Endothelial cell of umbilical vein (primary cell): ENCODE measurements at regions of chr3 and their contacts with region 1.

Region 1: DNA sequence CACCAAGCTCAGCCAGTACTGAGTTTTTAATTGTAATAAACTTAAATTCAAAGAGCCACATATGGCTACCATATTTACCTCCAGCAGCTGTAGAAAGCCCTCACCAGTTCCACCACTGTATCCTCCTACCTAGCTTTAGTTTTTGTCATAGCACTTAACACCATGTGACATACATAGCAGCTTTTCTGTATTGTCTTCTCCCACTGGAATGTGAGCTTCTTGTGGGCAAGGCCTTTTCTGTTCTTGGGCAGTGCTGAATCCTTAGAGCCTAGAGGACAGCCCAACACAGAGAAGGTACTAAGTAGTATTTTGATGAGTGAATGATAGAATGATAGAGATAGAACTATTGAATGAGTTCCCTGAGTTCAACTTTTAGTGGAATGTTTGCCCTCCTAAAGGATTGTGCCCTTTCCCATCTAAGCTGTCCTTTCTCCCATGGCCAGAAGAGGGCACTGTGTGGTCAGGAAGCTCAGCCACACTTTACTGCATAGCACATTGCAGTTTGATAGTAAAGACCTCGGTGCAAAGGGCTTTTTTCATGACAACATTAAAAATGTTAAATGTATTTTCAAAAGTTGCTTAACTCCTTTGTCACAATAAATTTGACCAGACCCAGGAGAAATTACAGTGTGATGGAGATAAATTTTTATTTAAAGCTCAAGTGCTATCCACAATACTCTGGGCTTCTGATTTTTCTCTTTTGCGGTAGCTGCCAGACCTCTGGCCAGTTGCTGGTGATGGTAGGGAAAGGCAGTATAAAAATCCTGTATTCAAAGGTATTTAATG is 115.8 kb downstream of the GHSR start:
- DNase-seq: peak; percentile 70
- H3K4me3 ChIP-seq: no peak overlapping the region
- H3K27ac ChIP-seq: no peak overlapping the region
- H3K4me1 ChIP-seq: no peaks in the 10 kb centered on the region
- H3K27me3 ChIP-seq: no peaks in the 10 kb centered on the region
- CTCF ChIP-seq: peak; percentile 82 to 91
- POLR2A ChIP-seq: no peak

Region 2: DNA sequence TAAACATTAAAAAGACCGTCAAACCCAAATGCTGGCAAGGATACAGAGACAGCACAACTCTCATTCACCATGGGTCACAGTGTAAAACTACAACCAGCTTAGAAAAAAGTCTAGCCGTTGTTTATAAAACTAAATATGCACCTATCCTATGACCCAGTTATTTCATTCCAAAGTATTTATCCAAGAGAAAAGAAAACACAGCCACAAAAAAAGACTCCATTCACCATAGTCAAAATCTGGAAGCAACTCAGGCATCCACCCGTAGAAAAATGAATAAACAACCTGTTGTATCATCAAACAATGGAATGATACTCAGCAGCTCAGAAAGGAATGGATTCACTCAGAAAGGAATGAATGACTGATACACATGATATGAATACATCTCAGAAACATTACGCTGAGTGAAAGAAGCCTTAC is 550.7 kb before region 1 on chr3:
- CTCF ChIA-PET with region 1: no interaction called
- POLR2A ChIA-PET with region 1: no interaction called
- dilution Hi-C with region 1: no loop called
- intact Hi-C with region 1: loop called (anchors 5 kb)
- DNase-seq: peak; percentile 44
- H3K4me3 ChIP-seq: no peak overlapping the region
- H3K27ac ChIP-seq: peak overlapping the region; percentile 61
- H3K4me1 ChIP-seq: peaks cover 53% of the 10 kb centered on the region
- H3K27me3 ChIP-seq: no peaks in the 10 kb centered on the region
- CTCF ChIP-seq: no peak
- POLR2A ChIP-seq: no peak

Region 3: DNA sequence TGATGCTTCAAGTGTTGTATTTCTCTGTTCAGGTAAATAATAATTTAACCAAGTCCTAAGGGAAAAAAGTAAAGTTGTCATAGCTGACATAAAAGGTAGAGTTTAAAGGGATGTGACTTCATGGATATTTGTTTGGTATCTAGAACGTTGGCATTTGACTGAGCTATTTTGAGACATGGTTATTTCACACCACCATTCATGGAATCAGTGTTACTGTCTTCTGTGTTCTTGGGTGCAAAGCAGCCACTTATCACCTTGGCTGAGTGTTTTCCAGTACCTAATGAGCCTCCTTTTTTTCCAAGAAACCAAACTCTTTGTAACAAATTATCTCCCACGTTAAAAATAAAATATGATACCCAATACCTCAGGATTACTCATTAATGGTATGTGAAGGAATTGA is 40.0 kb before region 1 on chr3:
- CTCF ChIA-PET with region 1: no interaction called
- POLR2A ChIA-PET with region 1: no interaction called
- dilution Hi-C with region 1: no loop called
- intact Hi-C with region 1: no loop called
- DNase-seq: no peak
- H3K4me3 ChIP-seq: no peak overlapping the region
- H3K27ac ChIP-seq: no peak overlapping the region
- H3K4me1 ChIP-seq: peaks cover 20% of the 10 kb centered on the region
- H3K27me3 ChIP-seq: no peaks in the 10 kb centered on the region
- CTCF ChIP-seq: no peak
- POLR2A ChIP-seq: no peak

Region 4: DNA sequence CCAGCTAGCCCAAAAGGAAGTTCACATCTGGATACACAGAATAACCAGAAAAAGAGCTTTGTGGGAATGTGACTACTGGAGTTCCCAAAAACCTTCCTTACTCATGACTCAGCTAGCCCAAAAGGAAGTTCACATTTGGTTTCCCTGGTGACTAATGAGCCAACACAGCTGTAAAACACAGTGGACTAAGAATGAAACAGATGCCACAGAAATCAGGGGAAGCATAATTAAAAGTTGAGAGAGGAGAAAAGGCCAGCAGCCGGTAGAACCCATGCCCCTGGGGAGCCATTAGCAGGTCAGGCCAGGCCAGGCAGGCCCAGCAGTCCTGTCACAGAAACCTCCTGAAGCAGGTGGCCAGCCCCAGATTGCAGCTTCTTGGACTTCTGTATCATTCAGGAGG is 14.5 kb before region 1 on chr3:
- CTCF ChIA-PET with region 1: interaction called, 68 read pairs
- POLR2A ChIA-PET with region 1: interaction called, 8 read pairs
- dilution Hi-C with region 1: no loop called
- intact Hi-C with region 1: no loop called
- DNase-seq: peak; percentile 94
- H3K4me3 ChIP-seq: no peak overlapping the region
- H3K27ac ChIP-seq: peak overlapping the region; percentile 96
- H3K4me1 ChIP-seq: peaks cover 32% of the 10 kb centered on the region
- H3K27me3 ChIP-seq: no peaks in the 10 kb centered on the region
- CTCF ChIP-seq: no peak
- POLR2A ChIP-seq: no peak

Region 5: GRCh38 chr3:172347895-172348680 is 15.6 kb after region 1 on chr3:
- CTCF ChIA-PET with region 1: interaction called, 65 read pairs
- POLR2A ChIA-PET with region 1: no interaction called
- dilution Hi-C with region 1: no loop called
- intact Hi-C with region 1: no loop called
- DNase-seq: peak; percentile 38
- H3K4me3 ChIP-seq: no peak overlapping the region
- H3K27ac ChIP-seq: no peak overlapping the region
- H3K4me1 ChIP-seq: peaks cover 15% of the 10 kb centered on the region
- H3K27me3 ChIP-seq: no peaks in the 10 kb centered on the region
- CTCF ChIP-seq: no peak
- POLR2A ChIP-seq: no peak

Region 6: GRCh38 chr3:172355839-172356238 is 23.4 kb after region 1 on chr3:
- CTCF ChIA-PET with region 1: interaction called, 18 read pairs
- POLR2A ChIA-PET with region 1: no interaction called
- dilution Hi-C with region 1: no loop called
- intact Hi-C with region 1: no loop called
- DNase-seq: peak; percentile 93
- H3K4me3 ChIP-seq: no peak overlapping the region
- H3K27ac ChIP-seq: no peak overlapping the region
- H3K4me1 ChIP-seq: peaks cover 16% of the 10 kb centered on the region
- H3K27me3 ChIP-seq: no peaks in the 10 kb centered on the region
- CTCF ChIP-seq: no peak
- POLR2A ChIP-seq: no peak

Region 7: DNA sequence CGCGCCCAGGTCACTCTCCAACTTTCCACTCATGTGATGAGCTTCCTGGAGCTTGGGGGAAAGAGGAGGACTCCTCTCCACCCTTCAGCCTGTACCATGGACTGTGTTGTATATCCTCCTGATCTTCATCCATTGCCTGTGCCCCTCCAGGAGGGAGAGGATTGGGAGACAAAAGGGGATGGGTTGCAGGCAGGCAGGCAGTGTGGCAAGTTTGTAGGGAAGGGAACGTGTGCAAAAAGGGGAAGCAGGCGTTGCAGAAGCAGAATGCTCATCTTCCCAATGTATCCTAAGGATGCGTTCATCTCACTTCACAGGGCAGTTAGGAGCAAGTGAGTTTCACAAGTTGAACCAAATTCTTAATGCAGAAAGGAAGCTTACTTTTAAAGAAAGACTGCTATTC is 143.9 kb after region 1 on chr3:
- CTCF ChIA-PET with region 1: interaction called, 29 read pairs
- POLR2A ChIA-PET with region 1: no interaction called
- dilution Hi-C with region 1: no loop called
- intact Hi-C with region 1: no loop called
- DNase-seq: peak; percentile 12
- H3K4me3 ChIP-seq: peak overlapping the region in 1 of 3 experiments; percentile 38
- H3K27ac ChIP-seq: peak overlapping the region; percentile 78
- H3K4me1 ChIP-seq: peaks cover 14% of the 10 kb centered on the region
- H3K27me3 ChIP-seq: no peaks in the 10 kb centered on the region
- CTCF ChIP-seq: no peak
- POLR2A ChIP-seq: no peak

Region 8: DNA sequence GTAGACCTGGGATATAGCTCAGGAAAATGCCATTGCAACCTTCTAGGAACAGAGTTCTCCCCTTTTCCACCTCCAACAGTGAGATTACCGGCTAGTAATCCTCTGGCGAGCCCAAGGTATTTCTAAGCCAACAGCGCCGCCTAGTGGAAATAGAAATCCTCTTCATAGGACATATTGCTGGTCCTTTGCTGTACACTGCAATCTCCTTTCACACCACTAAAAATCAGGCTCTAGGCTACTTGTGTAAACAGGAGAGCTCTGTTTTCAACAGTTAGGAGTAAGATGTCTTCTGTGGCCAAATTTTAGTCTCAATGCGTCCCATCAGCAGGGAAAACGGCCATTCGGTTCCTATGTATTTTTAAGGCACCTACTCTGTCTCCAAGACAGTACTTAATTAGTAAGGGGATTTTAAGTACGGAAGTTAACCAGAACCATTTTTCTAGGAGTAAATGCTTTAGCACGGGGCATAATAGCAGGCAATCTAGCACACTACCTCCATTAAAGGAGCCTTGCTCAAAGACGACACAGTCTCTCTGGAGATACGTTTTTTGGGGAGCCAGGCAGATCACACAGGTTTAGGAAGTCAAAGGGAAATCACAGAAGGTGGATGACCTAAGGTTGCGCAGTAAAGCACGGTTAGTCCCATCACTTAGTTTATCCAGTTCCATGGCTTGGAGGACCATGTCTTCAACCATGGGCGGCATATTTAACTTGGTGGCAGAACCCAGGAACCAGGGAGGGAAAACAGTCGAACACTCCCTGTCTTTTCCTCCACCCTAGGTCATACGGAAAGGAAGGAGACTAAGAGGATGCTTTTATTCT is 334.6 kb after region 1 on chr3:
- CTCF ChIA-PET with region 1: interaction called, 65 read pairs
- POLR2A ChIA-PET with region 1: no interaction called
- dilution Hi-C with region 1: no loop called
- intact Hi-C with region 1: loop called (anchors 1 kb)
- DNase-seq: peak; percentile 85
- H3K4me3 ChIP-seq: no peak overlapping the region
- H3K27ac ChIP-seq: no peak overlapping the region
- H3K4me1 ChIP-seq: peaks cover 6% of the 10 kb centered on the region
- H3K27me3 ChIP-seq: no peaks in the 10 kb centered on the region
- CTCF ChIP-seq: peak; percentile 67 to 84
- POLR2A ChIP-seq: no peak